Psoas muscle (tissue), 8 donors: ENCODE measurements at regions of chr4 and their contacts with region 1.

Region 1: GRCh38 chr4:168574581-168575295 is 77.9 kb downstream of the PALLD start:
- DNase-seq: no peak
- ATAC-seq: no peak
- H3K4me3 ChIP-seq: no peak overlapping the region
- H3K27ac ChIP-seq: no peak overlapping the region
- H3K4me1 ChIP-seq: peaks cover 27% of the 10 kb centered on the region
- H3K27me3 ChIP-seq: no peaks in the 10 kb centered on the region
- CTCF ChIP-seq: no peak

Region 2: GRCh38 chr4:168604496-168605373 is 30.0 kb after region 1 on chr4:
- intact Hi-C with region 1: loop called in 1 of 2 experiments (anchors 1 kb)
- DNase-seq: no peak
- ATAC-seq: peak; percentile 84 to 94 (median 90)
- H3K4me3 ChIP-seq: no peak overlapping the region
- H3K27ac ChIP-seq: peak overlapping the region; percentile 72
- H3K4me1 ChIP-seq: peaks cover 41% of the 10 kb centered on the region
- H3K27me3 ChIP-seq: no peaks in the 10 kb centered on the region
- CTCF ChIP-seq: no peak